ENCODE measurements at regions of chr14 and their contacts with region 1.

Region 1: GRCh38 chr14:34875031-34875922 is at the start of gene BAZ1A:
- DNase-seq: peak; percentile 41
- ATAC-seq: peak; percentile 39
- H3K4me3 ChIP-seq: peak within 1 kb of the TSS; percentile 88
- H3K27ac ChIP-seq: peak within 1 kb of the TSS; percentile 98
- H3K4me1 ChIP-seq: no peaks in the 10 kb centered on the region; the same call in 1 of the 2 replicates
- H3K27me3 ChIP-seq: no peaks in the 10 kb centered on the region
- CTCF ChIP-seq: no peak
- EP300 ChIP-seq: no peak
- POLR2A ChIP-seq: peak; percentile 47
- RAD21 ChIP-seq: no peak
- polyA plus RNA-seq, gene BAZ1A: 38.5 to 39.9 TPM

Region 2: DNA sequence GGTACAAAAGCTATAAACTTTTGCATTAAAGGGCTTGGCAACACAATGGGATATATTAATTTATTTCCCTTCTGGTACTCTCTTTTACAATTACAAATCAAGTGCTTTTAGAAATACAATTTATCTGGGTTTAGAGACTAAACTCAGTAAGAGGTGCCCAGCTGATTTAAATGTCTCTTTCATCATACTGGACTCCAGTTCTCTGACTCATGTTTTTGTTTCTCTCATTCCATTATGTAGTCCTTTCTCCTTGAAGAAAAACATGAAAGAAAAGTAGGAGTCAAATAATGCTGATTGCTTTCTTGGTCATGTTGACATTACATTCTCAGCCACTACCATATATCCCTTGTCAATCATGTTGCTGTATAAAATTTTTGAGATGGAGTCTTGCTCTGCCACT is 124.6 kb before region 1 on chr14:
- CTCF ChIA-PET with region 1: no interaction called
- POLR2A ChIA-PET with region 1: no interaction called
- RAD21 ChIA-PET with region 1: no interaction called
- SMC1A ChIA-PET with region 1: no interaction called
- in situ Hi-C with region 1: no loop called
- intact Hi-C with region 1: no loop called
- DNase-seq: no peak
- ATAC-seq: no peak
- H3K4me3 ChIP-seq: no peak overlapping the region
- H3K27ac ChIP-seq: no peak overlapping the region
- H3K4me1 ChIP-seq: no peaks in the 10 kb centered on the region
- H3K27me3 ChIP-seq: no peaks in the 10 kb centered on the region
- CTCF ChIP-seq: no peak
- EP300 ChIP-seq: no peak
- POLR2A ChIP-seq: no peak
- RAD21 ChIP-seq: no peak

Region 3: GRCh38 chr14:35046048-35046741 is 170.9 kb after region 1 on chr14 and contains the start of gene FAM177A1:
- CTCF ChIA-PET with region 1: interaction called, 6 read pairs
- POLR2A ChIA-PET with region 1: interaction called, 12 read pairs
- RAD21 ChIA-PET with region 1: interaction called, 9 read pairs
- SMC1A ChIA-PET with region 1: interaction called, 3 read pairs
- in situ Hi-C with region 1: no loop called
- intact Hi-C with region 1: loop called (anchors 1 kb)
- DNase-seq: peak; percentile 78
- ATAC-seq: peak; percentile 98
- H3K4me3 ChIP-seq: peak within 1 kb of the TSS; percentile 87
- H3K27ac ChIP-seq: peak within 1 kb of the TSS; percentile 67
- H3K4me1 ChIP-seq: peaks cover 6% of the 10 kb centered on the region; the same call in 1 of the 2 replicates
- H3K27me3 ChIP-seq: no peaks in the 10 kb centered on the region
- CTCF ChIP-seq: no peak
- EP300 ChIP-seq: no peak
- POLR2A ChIP-seq: peak; percentile 95
- RAD21 ChIP-seq: no peak
- polyA plus RNA-seq, gene FAM177A1: 5.3 to 11.0 TPM

Region 4: GRCh38 chr14:35088514-35088913 is 213.2 kb after region 1 on chr14:
- CTCF ChIA-PET with region 1: no interaction called
- POLR2A ChIA-PET with region 1: no interaction called
- RAD21 ChIA-PET with region 1: no interaction called
- SMC1A ChIA-PET with region 1: no interaction called
- in situ Hi-C with region 1: no loop called
- intact Hi-C with region 1: no loop called
- DNase-seq: no peak
- ATAC-seq: no peak
- H3K4me3 ChIP-seq: no peak overlapping the region
- H3K27ac ChIP-seq: no peak overlapping the region
- H3K4me1 ChIP-seq: no peaks in the 10 kb centered on the region
- H3K27me3 ChIP-seq: no peaks in the 10 kb centered on the region
- CTCF ChIP-seq: no peak
- EP300 ChIP-seq: no peak
- POLR2A ChIP-seq: no peak
- RAD21 ChIP-seq: no peak

Region 5: GRCh38 chr14:35519986-35520385 is 644.7 kb after region 1 on chr14:
- CTCF ChIA-PET with region 1: no interaction called
- POLR2A ChIA-PET with region 1: no interaction called
- RAD21 ChIA-PET with region 1: no interaction called
- SMC1A ChIA-PET with region 1: no interaction called
- in situ Hi-C with region 1: no loop called
- intact Hi-C with region 1: no loop called
- DNase-seq: no peak
- ATAC-seq: no peak
- H3K4me3 ChIP-seq: no peak overlapping the region
- H3K27ac ChIP-seq: no peak overlapping the region
- H3K4me1 ChIP-seq: no peaks in the 10 kb centered on the region
- H3K27me3 ChIP-seq: no peaks in the 10 kb centered on the region
- CTCF ChIP-seq: no peak
- EP300 ChIP-seq: no peak
- POLR2A ChIP-seq: no peak
- RAD21 ChIP-seq: no peak

Measured in GM12878 (cell line).